ENCODE measurements at regions of chr3 and their contacts with region 1.

Region 1: DNA sequence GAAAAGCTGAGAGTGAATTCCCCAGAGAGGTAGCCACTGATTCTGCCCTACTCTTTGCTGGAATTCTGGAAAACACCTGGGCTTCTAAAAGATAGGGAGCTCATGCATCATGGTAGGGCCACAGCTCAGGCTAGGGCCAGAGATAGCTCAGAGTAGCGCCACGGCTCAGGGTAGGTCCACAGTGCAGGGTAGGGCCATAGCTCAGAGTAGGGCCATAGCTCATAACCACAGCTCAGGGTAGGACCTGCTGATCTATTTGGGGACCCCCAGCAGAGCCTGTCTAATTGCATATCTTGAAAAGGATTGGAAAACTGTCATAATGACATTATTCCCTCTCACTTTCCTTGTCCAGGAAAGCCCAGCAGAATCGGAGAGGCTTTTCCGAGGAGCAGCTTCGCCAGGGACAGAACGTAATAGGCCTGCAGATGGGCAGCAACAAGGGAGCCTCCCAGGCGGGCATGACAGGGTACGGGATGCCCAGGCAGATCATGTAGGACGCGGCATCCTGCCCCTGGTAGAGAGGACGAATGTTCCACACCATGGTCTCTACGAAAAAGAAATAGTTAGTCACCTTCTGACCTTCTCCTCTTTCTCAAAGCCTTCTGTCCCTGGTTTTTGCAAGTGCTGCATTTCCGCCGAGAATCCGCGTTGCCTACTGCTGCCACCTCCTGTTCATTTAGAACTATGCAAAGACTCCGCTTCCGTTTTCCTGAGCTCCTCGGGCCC is 14.5 kb downstream of the TAGLN3 start:
- DNase-seq: peak; percentile 55
- H3K4me3 ChIP-seq: no peak overlapping the region
- H3K27ac ChIP-seq: no peak overlapping the region
- H3K27me3 ChIP-seq: no peaks in the 10 kb centered on the region
- CTCF ChIP-seq: peak; percentile 82

Region 2: DNA sequence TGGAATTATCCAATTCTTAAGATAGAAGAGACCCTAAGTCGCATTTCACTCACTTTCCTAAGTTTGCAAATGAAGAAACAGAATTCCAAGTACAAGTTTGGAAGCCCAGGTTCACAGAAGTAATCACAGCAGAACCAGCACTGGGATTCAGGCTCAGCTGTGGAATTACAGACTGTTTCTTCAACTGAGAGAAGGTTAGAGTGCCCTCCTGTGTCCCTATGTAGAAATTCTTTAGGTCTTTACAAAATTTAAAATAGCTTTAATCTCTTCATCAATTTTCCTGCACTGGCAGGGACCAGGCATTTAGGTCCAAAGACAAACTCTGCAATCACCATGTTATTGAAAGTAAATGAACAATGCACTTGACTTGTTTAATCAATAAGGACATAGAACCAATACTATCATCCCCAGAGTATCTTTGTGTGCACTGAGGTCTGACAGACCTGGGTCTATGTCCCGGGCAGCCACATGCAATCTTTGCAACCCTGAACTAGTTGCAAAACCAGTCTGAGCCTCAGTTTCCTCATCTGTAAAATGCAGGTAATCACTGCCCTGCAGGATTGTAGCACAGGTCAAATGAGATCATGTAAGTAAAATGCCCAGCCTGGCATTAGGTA is 321.8 kb before region 1 on chr3:
- CTCF ChIA-PET with region 1: interaction called, 13 read pairs
- POLR2A ChIA-PET with region 1: no interaction called
- DNase-seq: no peak
- H3K4me3 ChIP-seq: no peak overlapping the region
- H3K27ac ChIP-seq: no peak overlapping the region
- H3K27me3 ChIP-seq: peaks cover 2% of the 10 kb centered on the region
- CTCF ChIP-seq: peak; percentile 61

Region 3: GRCh38 chr3:111895079-111895478 is 118.1 kb before region 1 on chr3:
- CTCF ChIA-PET with region 1: interaction called, 23 read pairs
- POLR2A ChIA-PET with region 1: no interaction called
- DNase-seq: no peak
- H3K4me3 ChIP-seq: no peak overlapping the region
- H3K27ac ChIP-seq: no peak overlapping the region
- H3K27me3 ChIP-seq: no peaks in the 10 kb centered on the region
- CTCF ChIP-seq: peak; percentile 74

Region 4: DNA sequence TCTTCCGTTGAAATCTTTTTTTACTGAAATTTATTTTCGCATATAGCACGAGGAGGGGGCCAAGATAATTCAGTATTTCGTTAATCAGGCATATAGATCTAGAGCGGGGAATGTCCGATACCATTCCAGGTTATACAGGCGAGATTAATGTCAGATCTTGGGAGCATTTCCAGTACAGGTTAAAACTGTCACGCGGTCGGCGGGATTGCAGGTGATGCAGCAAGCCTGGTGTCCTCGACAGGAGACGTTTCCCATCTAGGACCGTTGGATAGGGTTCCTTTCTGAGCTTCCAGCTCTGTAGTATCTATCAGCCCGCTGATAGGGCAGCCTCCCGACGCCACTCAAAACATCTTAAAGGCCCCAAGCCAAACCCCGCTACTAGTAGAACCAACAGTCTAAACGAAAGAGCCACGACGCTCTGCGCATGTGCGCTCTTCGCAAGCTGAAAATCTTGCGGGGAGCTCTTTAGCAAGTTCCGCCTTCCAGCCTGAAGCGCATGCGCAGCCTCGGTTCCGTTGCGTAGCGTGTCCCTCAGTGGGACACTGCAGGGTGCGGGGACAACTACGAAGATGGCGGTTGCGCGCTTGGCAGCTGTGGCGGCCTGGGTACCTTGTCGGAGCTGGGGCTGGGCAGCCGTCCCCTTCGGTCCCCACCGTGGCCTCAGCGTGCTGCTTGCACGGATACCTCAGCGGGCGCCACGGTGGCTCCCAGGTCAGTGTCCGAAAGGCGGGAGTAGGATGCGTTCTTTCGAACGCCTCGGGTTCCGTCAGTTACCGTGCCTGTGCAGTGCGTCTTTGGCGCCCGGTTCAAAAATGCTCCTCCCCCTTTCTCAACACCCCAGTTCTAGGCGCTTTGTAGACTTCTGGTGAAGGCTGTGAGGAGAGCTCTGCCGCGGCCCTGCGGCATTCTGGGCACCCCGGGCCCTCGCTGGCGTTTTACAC is 34.5 kb before region 1 on chr3 and contains the start of gene ABHD10:
- CTCF ChIA-PET with region 1: interaction called, 17 read pairs
- POLR2A ChIA-PET with region 1: interaction called, 5 read pairs
- DNase-seq: peak; percentile 97
- H3K4me3 ChIP-seq: peak within 1 kb of the TSS; percentile 92
- H3K27ac ChIP-seq: peak within 1 kb of the TSS; percentile 47
- H3K27me3 ChIP-seq: no peaks in the 10 kb centered on the region
- CTCF ChIP-seq: no peak
- polyA plus RNA-seq, gene ABHD10: 28.8 and 37.5 TPM in 2 replicates

Region 5: GRCh38 chr3:111998636-111999483 is 14.4 kb before region 1 on chr3 and contains the start of gene TAGLN3:
- CTCF ChIA-PET with region 1: interaction called, 118 read pairs
- POLR2A ChIA-PET with region 1: interaction called, 3 read pairs
- DNase-seq: no peak
- H3K4me3 ChIP-seq: peak within 1 kb of the TSS; percentile 55
- H3K27ac ChIP-seq: peak within 1 kb of the TSS; percentile 49
- H3K27me3 ChIP-seq: no peaks in the 10 kb centered on the region
- CTCF ChIP-seq: no peak
- polyA plus RNA-seq, gene TAGLN3: 2.2 and 2.5 TPM in 2 replicates

Region 6: GRCh38 chr3:112043603-112044201 is 30.5 kb after region 1 on chr3:
- CTCF ChIA-PET with region 1: interaction called, 39 read pairs
- POLR2A ChIA-PET with region 1: no interaction called
- DNase-seq: peak; percentile 44
- H3K4me3 ChIP-seq: no peak overlapping the region
- H3K27ac ChIP-seq: no peak overlapping the region
- H3K27me3 ChIP-seq: no peaks in the 10 kb centered on the region
- CTCF ChIP-seq: peak; percentile 93

Region 7: GRCh38 chr3:112114576-112115160 is 101.4 kb after region 1 on chr3:
- CTCF ChIA-PET with region 1: no interaction called
- POLR2A ChIA-PET with region 1: no interaction called
- DNase-seq: no peak
- H3K4me3 ChIP-seq: no peak overlapping the region
- H3K27ac ChIP-seq: no peak overlapping the region
- H3K27me3 ChIP-seq: no peaks in the 10 kb centered on the region
- CTCF ChIP-seq: no peak